ENCODE measurements at regions of chr20 and their contacts with region 1.

Region 1: GRCh38 chr20:43969501-43970182 is 55.0 kb downstream of the TOX2 start:
- DNase-seq: no peak
- H3K4me3 ChIP-seq: no peak overlapping the region
- H3K4me3 Mint-ChIP-seq: no peak overlapping the region
- H3K27ac ChIP-seq: no peak overlapping the region
- H3K27ac Mint-ChIP-seq: no peak overlapping the region
- H3K4me1 ChIP-seq: peaks cover 2 to 4% of the 10 kb centered on the region in 2 donors
- H3K4me1 Mint-ChIP-seq: peaks cover 10% of the 10 kb centered on the region
- H3K27me3 ChIP-seq: peaks cover 2 to 30% of the 10 kb centered on the region in 2 donors
- H3K27me3 Mint-ChIP-seq: peaks cover 15 to 24% (median 22%) of the 10 kb centered on the region in 3 donors
- CTCF ChIP-seq: no peak

Region 2: DNA sequence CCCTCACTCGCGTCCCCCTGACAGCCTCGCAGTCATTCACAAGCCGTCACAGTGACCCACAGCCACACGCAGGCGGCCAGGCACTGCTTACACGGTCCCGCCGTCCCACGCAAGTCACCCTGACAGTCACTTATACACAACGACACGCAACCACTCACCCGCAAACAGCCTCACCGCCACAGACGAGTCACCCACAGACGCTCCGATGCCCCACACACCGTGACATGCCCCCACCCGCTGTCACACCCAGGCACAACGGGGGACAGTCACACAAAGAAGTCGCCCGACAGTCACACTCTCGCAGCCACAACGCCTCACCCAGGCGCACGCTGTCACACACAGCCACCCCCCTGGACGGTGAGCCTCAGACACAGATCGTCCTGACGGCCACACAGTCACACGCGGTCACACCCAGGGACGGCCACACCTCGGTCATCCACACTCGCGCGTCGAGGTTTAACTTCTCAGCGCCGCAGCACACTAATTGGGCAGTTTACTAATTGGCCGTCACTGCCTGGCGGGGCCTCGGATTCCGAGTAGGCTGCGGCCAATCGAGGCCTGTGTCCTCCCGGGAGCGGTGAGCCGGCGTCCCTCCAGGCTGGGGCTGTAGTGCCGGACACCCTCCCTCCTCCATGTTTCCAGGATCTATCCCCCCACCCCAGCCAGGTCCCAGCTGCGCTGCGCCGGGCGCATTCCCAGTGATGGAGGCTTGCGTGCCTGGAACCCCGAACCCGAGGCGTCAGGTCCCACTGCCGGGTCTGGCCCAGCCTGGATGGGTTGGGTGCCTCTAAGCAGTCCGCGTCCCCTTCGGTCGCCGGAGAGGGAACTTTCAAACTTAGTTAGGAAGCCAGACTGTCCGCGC is 54.2 kb before region 1 on chr20:
- intact Hi-C with region 1: no loop called
- DNase-seq: peak; percentile 21 to 58 (median 47)
- H3K4me3 ChIP-seq: no peak overlapping the region
- H3K4me3 Mint-ChIP-seq: peak overlapping the region; percentile 70 to 89
- H3K27ac ChIP-seq: no peak overlapping the region
- H3K27ac Mint-ChIP-seq: peak overlapping the region in 3 of 7 donors; percentile 8 to 60 (median 21)
- H3K4me1 ChIP-seq: peaks cover 12 to 29% of the 10 kb centered on the region in 2 donors
- H3K4me1 Mint-ChIP-seq: peaks cover 21% of the 10 kb centered on the region
- H3K27me3 ChIP-seq: peaks cover 56 to 89% of the 10 kb centered on the region in 2 donors
- H3K27me3 Mint-ChIP-seq: peaks cover 77 to 93% (median 80%) of the 10 kb centered on the region in 3 donors
- CTCF ChIP-seq: no peak

Region 3: DNA sequence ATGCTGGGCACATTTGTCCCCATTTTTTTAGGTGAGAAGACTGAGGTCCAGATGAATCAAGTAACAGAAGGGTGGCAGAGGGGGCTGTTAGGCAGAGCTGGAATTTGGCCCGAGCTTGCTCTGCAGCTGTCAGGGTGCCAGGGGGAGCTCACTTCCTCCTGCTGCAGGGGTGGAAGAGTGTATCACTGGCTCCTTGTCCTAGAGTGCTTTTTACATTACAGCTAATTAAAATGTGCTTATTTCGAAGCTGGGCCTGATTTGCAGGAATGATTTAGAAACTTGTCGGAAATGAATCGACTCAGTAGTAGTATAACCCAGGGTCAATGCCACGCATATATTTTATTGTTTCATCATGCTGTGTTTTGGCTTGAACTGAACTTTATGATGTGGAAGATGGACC is 43.8 kb before region 1 on chr20:
- intact Hi-C with region 1: loop called in 1 of 2 experiments (anchors 5 kb)
- DNase-seq: peak in 2 of 3 donors; percentile 16 to 27
- H3K4me3 ChIP-seq: no peak overlapping the region
- H3K4me3 Mint-ChIP-seq: peak overlapping the region in 1 of 2 donors; percentile 13
- H3K27ac ChIP-seq: no peak overlapping the region
- H3K27ac Mint-ChIP-seq: no peak overlapping the region
- H3K4me1 ChIP-seq: no peaks in the 10 kb centered on the region
- H3K4me1 Mint-ChIP-seq: peaks cover 17% of the 10 kb centered on the region
- H3K27me3 ChIP-seq: peaks cover 5 to 36% of the 10 kb centered on the region in 2 donors
- H3K27me3 Mint-ChIP-seq: peaks cover 39 to 57% (median 40%) of the 10 kb centered on the region in 3 donors
- CTCF ChIP-seq: peak; percentile 24